ENCODE measurements at regions of chr14 and their contacts with region 1.

Region 1: DNA sequence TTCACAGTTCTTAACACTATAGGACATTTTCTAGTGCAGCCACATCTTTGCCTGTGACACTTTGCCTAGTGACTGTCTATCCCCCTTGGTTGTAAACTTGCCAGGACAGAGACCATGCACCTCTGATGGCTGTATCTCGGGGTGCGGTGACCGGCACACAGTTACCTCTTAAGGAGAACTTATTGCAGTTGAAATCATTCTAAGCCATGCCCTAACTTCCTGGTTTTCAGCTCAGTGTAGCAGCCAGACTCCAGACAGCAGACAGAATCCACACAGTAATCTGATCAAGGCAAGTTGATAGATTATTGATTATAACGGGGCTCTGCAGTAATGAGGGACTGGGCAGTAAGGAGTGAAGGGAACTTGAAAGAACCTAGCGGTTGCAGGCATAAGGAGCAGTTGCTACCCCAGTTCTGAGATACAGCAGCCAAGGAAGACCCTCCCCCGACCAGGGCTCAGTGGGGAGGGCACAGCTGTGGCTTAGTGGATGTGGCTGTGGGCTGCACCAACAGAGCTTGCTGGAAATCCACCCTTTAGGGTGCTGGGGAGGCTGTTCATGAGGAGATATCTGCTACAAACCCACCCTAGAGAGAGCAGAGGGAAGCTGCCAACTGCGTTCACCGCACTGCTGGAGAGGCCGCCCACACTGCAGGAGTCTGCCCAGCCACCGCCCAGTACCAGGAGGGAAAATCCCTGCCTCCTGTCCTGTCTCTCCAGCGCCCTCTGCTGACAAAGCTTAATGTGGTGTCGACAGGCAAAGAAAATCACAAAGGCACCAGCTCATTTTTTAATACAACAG is 58.2 kb upstream of the BEGAIN start:
- DNase-seq: peak; percentile 74 to 93 (median 82)
- ATAC-seq: peak; percentile 88
- H3K4me3 ChIP-seq: peak overlapping the region; percentile 10
- H3K4me3 Mint-ChIP-seq: no peak overlapping the region
- H3K27ac ChIP-seq: no peak overlapping the region
- H3K27ac Mint-ChIP-seq: peak overlapping the region; percentile 14
- H3K4me1 ChIP-seq: peaks cover 52% of the 10 kb centered on the region
- H3K4me1 Mint-ChIP-seq: peaks cover 54% of the 10 kb centered on the region
- H3K27me3 ChIP-seq: no peaks in the 10 kb centered on the region
- H3K27me3 Mint-ChIP-seq: no peaks in the 10 kb centered on the region
- CTCF ChIP-seq: peak; percentile 89

Region 2: DNA sequence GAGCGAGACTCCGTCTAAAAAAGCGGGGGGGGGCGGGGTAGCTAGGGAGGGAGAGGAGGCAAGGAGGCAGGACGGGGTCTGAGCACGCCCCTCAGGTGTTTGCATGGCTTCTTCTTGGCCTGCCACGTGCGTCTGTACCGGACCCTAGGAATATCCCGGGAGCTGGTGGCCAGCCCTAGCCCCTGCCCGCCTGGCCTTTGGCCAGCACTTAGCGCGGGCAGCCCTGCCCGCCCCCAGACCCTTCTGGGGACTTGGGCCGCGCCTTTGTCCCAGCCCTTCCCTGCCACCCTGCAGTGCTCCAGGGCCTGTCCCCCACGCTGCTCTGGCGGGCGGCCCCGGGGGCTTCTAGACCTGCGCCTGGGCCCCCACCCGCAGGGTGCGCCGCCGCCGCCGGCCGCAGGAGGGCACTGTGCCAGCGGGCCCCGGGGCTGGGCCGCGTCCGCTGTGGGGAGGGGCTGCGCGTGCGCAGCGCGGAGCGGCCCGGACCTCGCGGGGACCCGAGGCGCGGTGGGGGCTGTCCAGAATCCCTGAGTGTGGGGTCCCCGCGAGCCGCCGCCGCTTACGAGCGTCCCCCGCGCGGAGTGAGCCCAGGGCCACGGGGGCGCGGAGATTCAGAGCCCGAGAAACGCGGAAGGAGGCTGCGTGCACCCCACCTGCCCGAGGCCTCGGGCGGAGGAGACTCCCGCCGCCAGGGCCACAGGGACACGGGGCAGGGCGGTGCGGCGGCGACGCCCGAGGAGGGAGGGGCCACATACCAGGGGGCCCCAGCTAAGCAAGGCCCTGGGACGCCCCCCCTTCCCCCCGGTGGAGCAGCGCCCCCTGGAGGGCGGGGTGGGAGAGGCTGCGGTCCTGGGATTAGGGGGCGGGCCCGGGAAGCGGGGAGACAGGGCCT is 360.1 kb before region 1 on chr14:
- CTCF ChIA-PET with region 1: no interaction called
- POLR2A ChIA-PET with region 1: no interaction called
- intact Hi-C with region 1: loop called in 1 of 2 experiments (anchors 1 kb)
- DNase-seq: peak; percentile 60 to 91 (median 76)
- ATAC-seq: peak; percentile 92
- H3K4me3 ChIP-seq: peak overlapping the region; percentile 59
- H3K4me3 Mint-ChIP-seq: peak overlapping the region; percentile 80
- H3K27ac ChIP-seq: peak overlapping the region in 1 of 2 donors; percentile 79
- H3K27ac Mint-ChIP-seq: peak overlapping the region; percentile 42
- H3K4me1 ChIP-seq: peaks cover 15% of the 10 kb centered on the region
- H3K4me1 Mint-ChIP-seq: no peaks in the 10 kb centered on the region
- H3K27me3 ChIP-seq: no peaks in the 10 kb centered on the region
- H3K27me3 Mint-ChIP-seq: no peaks in the 10 kb centered on the region
- CTCF ChIP-seq: peak; percentile 96

Region 3: DNA sequence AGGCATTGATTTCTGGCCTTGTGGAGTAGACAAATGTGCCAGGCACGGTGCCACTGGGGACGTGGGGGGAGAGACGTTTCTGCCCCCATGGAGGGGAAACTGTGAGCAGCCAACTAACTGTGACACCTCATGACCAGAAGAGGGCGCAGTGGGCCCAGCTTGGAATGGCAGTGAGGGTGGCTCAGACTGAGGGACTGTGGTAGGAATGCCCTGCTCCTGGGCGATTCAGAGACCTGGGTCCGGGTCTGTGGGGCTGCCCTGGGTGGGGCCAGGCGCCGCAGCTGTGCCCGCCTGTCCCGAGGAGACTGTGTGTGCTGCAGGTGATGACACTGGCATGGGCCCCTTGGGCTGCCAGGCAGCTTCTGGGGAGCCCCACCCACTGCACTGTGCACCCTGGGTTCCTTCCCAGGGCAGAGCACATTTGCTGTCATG is 261.6 kb before region 1 on chr14:
- CTCF ChIA-PET with region 1: interaction called, 37 read pairs
- POLR2A ChIA-PET with region 1: interaction called, 10 read pairs
- intact Hi-C with region 1: loop called (anchors 1 to 2 kb)
- DNase-seq: peak; percentile 42 to 84 (median 56)
- ATAC-seq: peak; percentile 88
- H3K4me3 ChIP-seq: no peak overlapping the region
- H3K4me3 Mint-ChIP-seq: no peak overlapping the region
- H3K27ac ChIP-seq: no peak overlapping the region
- H3K27ac Mint-ChIP-seq: no peak overlapping the region
- H3K4me1 ChIP-seq: peaks cover 15% of the 10 kb centered on the region
- H3K4me1 Mint-ChIP-seq: peaks cover 19% of the 10 kb centered on the region
- H3K27me3 ChIP-seq: no peaks in the 10 kb centered on the region
- H3K27me3 Mint-ChIP-seq: no peaks in the 10 kb centered on the region
- CTCF ChIP-seq: peak; percentile 78

Region 4: GRCh38 chr14:100440187-100440631 is 205.2 kb before region 1 on chr14:
- CTCF ChIA-PET with region 1: interaction called, 13 read pairs
- POLR2A ChIA-PET with region 1: no interaction called
- intact Hi-C with region 1: no loop called
- DNase-seq: peak in 10 of 14 experiments; percentile 9 to 70 (median 27)
- ATAC-seq: no peak
- H3K4me3 ChIP-seq: no peak overlapping the region
- H3K4me3 Mint-ChIP-seq: no peak overlapping the region
- H3K27ac ChIP-seq: no peak overlapping the region
- H3K27ac Mint-ChIP-seq: no peak overlapping the region
- H3K4me1 ChIP-seq: peaks cover 3% of the 10 kb centered on the region
- H3K4me1 Mint-ChIP-seq: peaks cover 17% of the 10 kb centered on the region
- H3K27me3 ChIP-seq: no peaks in the 10 kb centered on the region
- H3K27me3 Mint-ChIP-seq: no peaks in the 10 kb centered on the region
- CTCF ChIP-seq: peak; percentile 19

Region 5: DNA sequence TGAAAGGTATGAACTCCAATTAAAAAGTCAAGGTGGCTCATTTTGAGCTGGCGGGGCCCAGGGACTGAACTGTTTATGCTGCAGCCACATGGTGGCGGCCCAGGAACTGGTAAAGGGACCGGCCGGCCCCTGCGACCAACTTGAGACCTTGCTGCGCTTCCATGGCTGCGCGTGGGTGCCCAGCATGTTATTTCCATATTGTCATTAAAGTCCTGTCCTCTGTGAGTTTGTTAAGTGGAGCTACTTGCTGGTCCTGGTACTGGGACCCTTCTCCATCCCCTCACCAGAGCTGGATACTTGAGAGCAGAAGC is 120.5 kb before region 1 on chr14:
- CTCF ChIA-PET with region 1: interaction called, 11 read pairs
- POLR2A ChIA-PET with region 1: interaction called, 9 read pairs
- intact Hi-C with region 1: loop called (anchors 1 to 2 kb)
- DNase-seq: peak in 5 of 14 experiments; percentile 12 to 59 (median 27)
- ATAC-seq: no peak
- H3K4me3 ChIP-seq: no peak overlapping the region
- H3K4me3 Mint-ChIP-seq: no peak overlapping the region
- H3K27ac ChIP-seq: no peak overlapping the region
- H3K27ac Mint-ChIP-seq: no peak overlapping the region
- H3K4me1 ChIP-seq: no peaks in the 10 kb centered on the region
- H3K4me1 Mint-ChIP-seq: no peaks in the 10 kb centered on the region
- H3K27me3 ChIP-seq: no peaks in the 10 kb centered on the region
- H3K27me3 Mint-ChIP-seq: no peaks in the 10 kb centered on the region
- CTCF ChIP-seq: peak; percentile 55

Region 6: DNA sequence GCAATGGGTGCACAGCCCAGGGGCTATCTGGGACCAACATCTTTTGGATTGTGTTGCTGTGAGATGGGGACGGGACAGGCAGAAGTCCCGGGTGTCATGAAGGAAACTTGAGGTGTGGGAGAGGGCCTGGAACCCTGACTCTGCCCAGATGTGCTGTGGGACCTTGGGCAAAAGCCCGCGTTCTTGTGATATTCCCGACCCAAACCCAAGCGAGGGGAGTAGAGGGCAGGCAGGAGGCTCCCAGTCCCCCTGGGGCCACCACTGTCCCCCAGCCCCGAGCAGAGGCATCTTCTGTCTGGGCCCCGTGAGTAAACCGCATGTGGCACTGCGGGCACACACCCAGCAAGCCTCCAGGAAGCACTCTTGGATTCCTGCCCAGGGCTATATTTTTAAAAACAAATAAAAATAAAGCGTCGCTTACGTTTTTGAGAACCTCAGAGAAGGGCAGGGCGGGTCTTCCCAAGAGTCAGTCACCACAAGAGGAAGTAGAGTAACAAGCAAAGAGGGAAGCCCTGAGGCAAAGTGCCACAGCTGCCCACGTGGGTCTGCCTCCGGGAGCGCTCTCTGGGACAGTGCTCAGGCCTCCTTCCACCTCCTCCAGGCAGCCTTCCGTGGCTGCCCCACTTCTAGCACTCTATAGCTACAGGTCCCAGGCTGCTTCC is 97.6 kb before region 1 on chr14:
- CTCF ChIA-PET with region 1: interaction called, 7 read pairs
- POLR2A ChIA-PET with region 1: interaction called, 8 read pairs
- intact Hi-C with region 1: loop called in 1 of 2 experiments (anchors 5 kb)
- DNase-seq: peak in 10 of 14 experiments; percentile 26 to 91 (median 52)
- ATAC-seq: peak; percentile 50
- H3K4me3 ChIP-seq: peak overlapping the region; percentile 58
- H3K4me3 Mint-ChIP-seq: peak overlapping the region; percentile 78
- H3K27ac ChIP-seq: peak overlapping the region; percentile 38 to 79
- H3K27ac Mint-ChIP-seq: peak overlapping the region; percentile 74
- H3K4me1 ChIP-seq: peaks cover 43% of the 10 kb centered on the region
- H3K4me1 Mint-ChIP-seq: peaks cover 24% of the 10 kb centered on the region
- H3K27me3 ChIP-seq: no peaks in the 10 kb centered on the region
- H3K27me3 Mint-ChIP-seq: no peaks in the 10 kb centered on the region
- CTCF ChIP-seq: no peak

Region 7: GRCh38 chr14:100634026-100634425 is 11.4 kb before region 1 on chr14:
- CTCF ChIA-PET with region 1: interaction called, 13 read pairs
- POLR2A ChIA-PET with region 1: interaction called, 4 read pairs
- intact Hi-C with region 1: no loop called
- DNase-seq: no peak
- ATAC-seq: no peak
- H3K4me3 ChIP-seq: no peak overlapping the region
- H3K4me3 Mint-ChIP-seq: no peak overlapping the region
- H3K27ac ChIP-seq: no peak overlapping the region
- H3K27ac Mint-ChIP-seq: no peak overlapping the region
- H3K4me1 ChIP-seq: peaks cover 20% of the 10 kb centered on the region
- H3K4me1 Mint-ChIP-seq: peaks cover 10% of the 10 kb centered on the region
- H3K27me3 ChIP-seq: no peaks in the 10 kb centered on the region
- H3K27me3 Mint-ChIP-seq: no peaks in the 10 kb centered on the region
- CTCF ChIP-seq: no peak

Region 8: GRCh38 chr14:100761481-100761880 is 116.1 kb after region 1 on chr14:
- CTCF ChIA-PET with region 1: no interaction called
- POLR2A ChIA-PET with region 1: no interaction called
- intact Hi-C with region 1: no loop called
- DNase-seq: no peak
- ATAC-seq: no peak
- H3K4me3 ChIP-seq: no peak overlapping the region
- H3K4me3 Mint-ChIP-seq: no peak overlapping the region
- H3K27ac ChIP-seq: no peak overlapping the region
- H3K27ac Mint-ChIP-seq: no peak overlapping the region
- H3K4me1 ChIP-seq: no peaks in the 10 kb centered on the region
- H3K4me1 Mint-ChIP-seq: no peaks in the 10 kb centered on the region
- H3K27me3 ChIP-seq: peaks cover 0 to 2% of the 10 kb centered on the region in 2 experiments
- H3K27me3 Mint-ChIP-seq: no peaks in the 10 kb centered on the region
- CTCF ChIP-seq: no peak

Measured in CD4-positive, alpha-beta T cell (primary cell).